ENCODE measurements at regions of chr3 and their contacts with region 1.

Region 1: DNA sequence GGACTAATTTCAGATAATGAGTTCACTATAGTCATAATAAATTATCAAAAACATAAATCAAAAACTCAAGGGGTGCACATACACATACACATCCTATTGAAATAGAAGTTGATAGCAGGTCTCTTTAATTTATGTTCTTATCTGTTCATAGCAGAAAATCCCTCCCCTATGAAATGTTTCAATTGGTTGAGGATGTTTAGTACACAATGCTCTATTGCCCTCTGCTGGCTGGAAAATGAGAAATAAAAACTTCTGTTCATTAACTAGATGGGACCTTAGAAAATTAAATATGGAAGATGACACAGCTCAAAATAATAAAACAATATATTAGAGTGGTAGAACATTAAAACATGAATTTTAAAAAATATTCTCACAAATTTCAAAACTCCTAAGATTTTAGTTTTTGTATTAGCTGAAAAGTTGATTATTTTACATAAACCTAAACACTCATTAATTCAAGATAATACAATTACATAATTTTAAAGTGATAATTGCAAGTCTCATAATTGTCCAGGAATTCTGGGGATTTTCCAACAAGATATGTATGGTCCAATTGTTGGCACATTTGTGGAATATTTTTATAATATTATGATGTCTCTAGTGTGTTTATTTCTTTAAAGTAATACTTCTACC is 735.0 kb downstream of the ROBO1 start:
- DNase-seq: peak; percentile 13
- H3K4me3 ChIP-seq: no peak overlapping the region
- H3K27ac ChIP-seq: no peak overlapping the region
- H3K27me3 ChIP-seq: no peaks in the 10 kb centered on the region
- CTCF ChIP-seq: peak; percentile 68

Region 2: DNA sequence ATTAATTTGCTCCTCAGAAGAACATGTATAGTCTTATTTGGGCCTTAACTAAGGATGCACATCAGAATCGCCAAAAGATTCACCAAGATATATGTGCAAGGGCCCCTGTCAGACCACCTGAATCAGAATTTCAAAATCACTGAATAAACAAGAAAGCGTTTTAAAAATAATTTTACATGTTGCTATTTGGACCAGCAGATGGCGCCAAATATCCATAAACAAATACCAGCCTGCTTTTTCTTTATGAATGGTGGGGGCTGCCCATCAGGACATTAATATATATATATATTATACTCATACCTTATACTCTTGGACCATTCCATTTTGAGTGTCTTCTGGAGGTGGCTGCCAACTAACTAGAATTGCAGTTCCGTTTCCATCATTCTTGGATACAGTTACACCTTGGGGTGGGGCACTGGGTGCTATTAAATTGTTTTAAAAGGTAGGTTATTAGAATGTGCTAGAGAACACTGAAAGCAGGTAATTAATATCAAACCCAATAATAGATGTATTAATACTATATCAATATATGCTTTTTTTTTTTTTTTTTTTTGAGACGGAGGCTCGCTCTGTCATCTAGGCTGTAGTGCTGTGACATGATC is 373.3 kb before region 1 on chr3:
- CTCF ChIA-PET with region 1: interaction called, 34 read pairs
- POLR2A ChIA-PET with region 1: no interaction called
- DNase-seq: peak; percentile 23
- H3K4me3 ChIP-seq: no peak overlapping the region
- H3K27ac ChIP-seq: no peak overlapping the region
- H3K27me3 ChIP-seq: no peaks in the 10 kb centered on the region
- CTCF ChIP-seq: peak; percentile 60

Region 3: GRCh38 chr3:78887547-78888011 is 145.2 kb before region 1 on chr3:
- CTCF ChIA-PET with region 1: no interaction called
- POLR2A ChIA-PET with region 1: no interaction called
- DNase-seq: no peak
- H3K4me3 ChIP-seq: no peak overlapping the region
- H3K27ac ChIP-seq: no peak overlapping the region
- H3K27me3 ChIP-seq: no peaks in the 10 kb centered on the region
- CTCF ChIP-seq: no peak

Region 4: GRCh38 chr3:78919021-78919755 is 113.6 kb before region 1 on chr3:
- CTCF ChIA-PET with region 1: no interaction called
- POLR2A ChIA-PET with region 1: no interaction called
- DNase-seq: peak; percentile 81
- H3K4me3 ChIP-seq: no peak overlapping the region
- H3K27ac ChIP-seq: peak overlapping the region; percentile 60
- H3K27me3 ChIP-seq: no peaks in the 10 kb centered on the region
- CTCF ChIP-seq: no peak

Region 5: GRCh38 chr3:79019137-79019923 is 13.5 kb before region 1 on chr3:
- CTCF ChIA-PET with region 1: interaction called, 23 read pairs
- POLR2A ChIA-PET with region 1: interaction called, 3 read pairs
- DNase-seq: peak; percentile 77
- H3K4me3 ChIP-seq: peak overlapping the region; percentile 82
- H3K27ac ChIP-seq: peak overlapping the region; percentile 98
- H3K27me3 ChIP-seq: no peaks in the 10 kb centered on the region
- CTCF ChIP-seq: no peak

Region 6: DNA sequence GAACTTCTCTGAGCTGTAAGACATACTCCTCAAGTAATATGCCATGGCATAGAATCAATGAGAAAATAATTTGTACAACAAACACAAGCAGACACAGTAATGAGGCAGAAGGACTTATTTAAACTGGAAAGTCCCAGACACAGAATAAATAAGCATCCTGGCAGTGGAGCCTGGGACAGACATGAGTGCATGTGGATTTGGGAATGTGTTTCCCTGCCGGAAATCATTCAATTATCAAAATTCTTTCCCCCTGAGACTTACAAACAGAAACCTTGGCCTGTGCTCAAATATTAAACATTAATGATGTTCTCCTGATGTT is 214.9 kb after region 1 on chr3:
- CTCF ChIA-PET with region 1: no interaction called
- POLR2A ChIA-PET with region 1: no interaction called
- DNase-seq: peak; percentile 27
- H3K4me3 ChIP-seq: peak overlapping the region; percentile 3; the same call in 1 of the 2 replicates
- H3K27ac ChIP-seq: peak overlapping the region; percentile 58
- H3K27me3 ChIP-seq: no peaks in the 10 kb centered on the region
- CTCF ChIP-seq: no peak

Region 7: DNA sequence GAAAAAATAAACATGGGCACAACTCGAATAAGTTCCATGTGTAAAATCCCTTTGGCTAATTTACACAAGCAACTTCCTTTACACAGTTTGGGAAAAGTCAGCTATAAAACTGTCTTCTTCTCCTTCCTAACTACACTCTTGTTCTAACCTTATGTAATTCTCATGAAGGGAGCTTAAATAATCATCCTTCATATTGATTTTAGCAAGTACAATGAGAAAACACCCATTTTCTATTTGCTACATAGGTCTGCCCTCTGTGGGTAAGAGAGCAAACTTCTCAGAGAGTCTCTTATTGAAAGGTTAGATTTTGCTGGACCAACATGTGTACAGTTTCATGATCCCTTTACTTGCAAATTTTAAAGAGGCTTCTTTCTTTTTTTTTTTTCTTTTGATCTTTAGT is 336.5 kb after region 1 on chr3:
- CTCF ChIA-PET with region 1: interaction called, 12 read pairs
- POLR2A ChIA-PET with region 1: no interaction called
- DNase-seq: no peak
- H3K4me3 ChIP-seq: no peak overlapping the region
- H3K27ac ChIP-seq: no peak overlapping the region
- H3K27me3 ChIP-seq: no peaks in the 10 kb centered on the region
- CTCF ChIP-seq: peak; percentile 55